ENCODE measurements at regions of chr5 and their contacts with region 1.

Region 1: DNA sequence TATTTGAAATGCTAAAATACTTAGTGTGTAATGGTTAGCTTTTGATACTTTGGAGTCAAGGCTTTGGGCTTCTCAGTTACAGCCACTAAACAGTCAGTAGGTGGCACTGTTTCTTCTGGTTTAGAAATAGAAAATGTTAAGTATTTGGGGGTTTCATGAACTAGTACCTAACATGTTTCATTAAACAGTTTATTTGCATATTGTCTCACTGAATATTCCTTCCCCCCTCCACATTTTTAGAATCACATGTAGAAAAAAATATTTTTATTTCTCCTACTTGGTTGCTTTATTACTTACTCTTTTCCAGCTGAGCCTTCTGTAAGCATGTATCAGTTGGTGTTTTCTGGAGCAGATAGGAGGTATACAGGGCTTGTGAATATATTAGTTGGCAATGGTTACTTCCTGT is 48.0 kb downstream of the IPO11 start:
- H3K4me3 ChIP-seq: no peak overlapping the region
- H3K27ac ChIP-seq: no peak overlapping the region
- H3K4me1 ChIP-seq: no peaks in the 10 kb centered on the region
- CTCF ChIP-seq: peak; percentile 36; the same call in 1 of the 2 replicates

Region 2: DNA sequence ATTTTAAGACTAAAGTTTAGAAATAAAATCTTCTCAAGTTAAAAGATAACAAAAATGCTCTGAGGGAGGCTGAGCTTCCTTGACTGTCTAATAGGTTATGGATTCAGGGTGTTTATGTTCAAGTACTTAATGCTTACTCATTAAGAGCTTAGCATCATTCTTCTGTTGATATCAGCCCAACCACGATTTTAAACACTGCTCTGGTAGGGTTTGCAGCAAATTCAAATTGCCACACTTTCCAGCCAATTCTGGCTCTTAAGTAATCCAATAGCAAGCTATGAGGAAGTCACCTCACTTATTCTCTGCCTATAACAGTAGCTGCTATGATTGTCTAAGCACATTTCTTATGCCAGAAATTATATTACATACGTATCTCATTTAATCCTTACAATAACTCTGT is 345.6 kb before region 1 on chr5:
- CTCF ChIA-PET with region 1: no interaction called
- POLR2A ChIA-PET with region 1: no interaction called
- H3K4me3 ChIP-seq: no peak overlapping the region
- H3K27ac ChIP-seq: no peak overlapping the region
- H3K4me1 ChIP-seq: no peaks in the 10 kb centered on the region
- CTCF ChIP-seq: no peak

Region 3: DNA sequence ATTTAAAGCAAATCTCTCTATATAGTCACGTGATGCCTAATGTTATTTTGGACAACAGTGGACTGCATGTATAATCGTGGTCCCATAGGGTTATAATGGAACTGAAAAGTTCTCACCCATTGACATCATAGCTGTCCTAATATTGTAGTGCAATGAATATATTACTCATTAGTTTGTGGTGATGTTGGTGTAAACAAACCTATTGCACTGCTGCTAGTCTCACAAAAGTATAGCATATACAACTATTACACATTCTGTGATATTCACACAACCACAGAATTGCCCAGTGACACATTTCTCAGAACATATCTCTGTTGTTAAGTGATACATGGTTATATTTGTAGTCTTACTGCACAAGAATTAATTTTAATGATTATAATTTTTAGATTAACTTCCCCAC is 10.3 kb before region 1 on chr5:
- CTCF ChIA-PET with region 1: interaction called, 10 read pairs
- POLR2A ChIA-PET with region 1: no interaction called
- H3K4me3 ChIP-seq: no peak overlapping the region
- H3K27ac ChIP-seq: no peak overlapping the region
- H3K4me1 ChIP-seq: no peaks in the 10 kb centered on the region
- CTCF ChIP-seq: no peak

Region 4: DNA sequence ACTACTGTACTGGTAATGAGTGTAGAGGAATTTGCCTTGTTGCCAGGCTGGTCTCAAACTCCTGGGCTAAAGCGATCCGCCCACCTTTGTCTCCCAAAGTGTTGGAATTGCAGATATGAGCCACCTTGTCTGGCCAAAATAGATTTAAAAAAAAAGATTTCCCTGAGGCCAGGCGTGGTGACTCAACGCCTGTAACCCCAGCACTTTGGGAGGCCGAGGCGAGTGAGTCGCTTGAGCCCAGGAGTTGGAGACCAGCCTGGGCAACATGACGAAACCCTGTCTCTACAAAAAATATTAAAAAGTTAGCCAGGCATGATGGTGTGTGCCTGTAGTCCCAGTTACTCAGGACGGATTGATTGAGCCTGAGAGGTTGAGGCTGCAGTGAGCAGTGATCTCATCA is 14.5 kb after region 1 on chr5:
- CTCF ChIA-PET with region 1: interaction called, 14 read pairs
- POLR2A ChIA-PET with region 1: no interaction called
- H3K4me3 ChIP-seq: no peak overlapping the region
- H3K27ac ChIP-seq: no peak overlapping the region
- H3K4me1 ChIP-seq: no peaks in the 10 kb centered on the region
- CTCF ChIP-seq: no peak